Ovary (tissue), 10 donors: ENCODE measurements at regions of chrX and their contacts with region 1.

Region 1: GRCh38 chrX:80282535-80282934 is 137.7 kb upstream of the TENT5D start:
- DNase-seq: no peak
- H3K4me3 ChIP-seq: no peak overlapping the region
- H3K27ac ChIP-seq: no peak overlapping the region
- H3K4me1 ChIP-seq: no peaks in the 10 kb centered on the region
- H3K27me3 ChIP-seq: no peaks in the 10 kb centered on the region
- CTCF ChIP-seq: no peak
- EP300 ChIP-seq: no peak
- POLR2A ChIP-seq: no peak

Region 2: GRCh38 chrX:80216086-80216485 is 66.4 kb before region 1 on chrX:
- intact Hi-C with region 1: no loop called
- DNase-seq: no peak
- H3K4me3 ChIP-seq: no peak overlapping the region
- H3K27ac ChIP-seq: no peak overlapping the region
- H3K4me1 ChIP-seq: no peaks in the 10 kb centered on the region
- H3K27me3 ChIP-seq: no peaks in the 10 kb centered on the region
- CTCF ChIP-seq: no peak
- EP300 ChIP-seq: no peak
- POLR2A ChIP-seq: no peak

Region 3: GRCh38 chrX:80317646-80318045 is 35.1 kb after region 1 on chrX:
- intact Hi-C with region 1: loop called in 1 of 4 experiments (anchors 2 kb)
- DNase-seq: no peak
- H3K4me3 ChIP-seq: no peak overlapping the region
- H3K27ac ChIP-seq: no peak overlapping the region
- H3K4me1 ChIP-seq: no peaks in the 10 kb centered on the region
- H3K27me3 ChIP-seq: no peaks in the 10 kb centered on the region
- CTCF ChIP-seq: no peak
- EP300 ChIP-seq: no peak
- POLR2A ChIP-seq: no peak

Region 4: GRCh38 chrX:80403499-80403898 is 121.0 kb after region 1 on chrX:
- intact Hi-C with region 1: no loop called
- DNase-seq: no peak
- H3K4me3 ChIP-seq: no peak overlapping the region
- H3K27ac ChIP-seq: no peak overlapping the region
- H3K4me1 ChIP-seq: no peaks in the 10 kb centered on the region
- H3K27me3 ChIP-seq: no peaks in the 10 kb centered on the region
- CTCF ChIP-seq: no peak
- EP300 ChIP-seq: no peak
- POLR2A ChIP-seq: no peak

Region 5: GRCh38 chrX:80578517-80579105 is 296.1 kb after region 1 on chrX:
- intact Hi-C with region 1: loop called in 1 of 4 experiments (anchors 5 kb)
- DNase-seq: no peak
- H3K4me3 ChIP-seq: no peak overlapping the region
- H3K27ac ChIP-seq: no peak overlapping the region
- H3K4me1 ChIP-seq: no peaks in the 10 kb centered on the region
- H3K27me3 ChIP-seq: no peaks in the 10 kb centered on the region
- CTCF ChIP-seq: peak in 2 of 3 donors; percentile 19 to 21
- EP300 ChIP-seq: no peak
- POLR2A ChIP-seq: no peak